Activated CD4-positive, alpha-beta memory T cell treated with anti-CD3 and anti-CD28 coated beads, Interleukin-2, amount 10 ng/mL, durations not matched to agents 7 days and 5 days (primary cell): ENCODE measurements at regions of chr2 and their contacts with region 1.

Region 1: GRCh38 chr2:181715033-181715630 is 34.8 kb upstream of the NEUROD1 start:
- DNase-seq: peak; percentile 73
- H3K4me3 Mint-ChIP-seq: no peak overlapping the region
- H3K27ac Mint-ChIP-seq: no peak overlapping the region
- H3K4me1 Mint-ChIP-seq: no peaks in the 10 kb centered on the region
- H3K27me3 Mint-ChIP-seq: peaks cover 7% of the 10 kb centered on the region

Region 2: GRCh38 chr2:181077128-181077709 is 637.9 kb before region 1 on chr2:
- CTCF ChIA-PET with region 1: interaction called, 12 read pairs
- POLR2A ChIA-PET with region 1: no interaction called
- DNase-seq: no peak
- H3K4me3 Mint-ChIP-seq: no peak overlapping the region
- H3K27ac Mint-ChIP-seq: no peak overlapping the region
- H3K4me1 Mint-ChIP-seq: peaks cover 9% of the 10 kb centered on the region
- H3K27me3 Mint-ChIP-seq: no peaks in the 10 kb centered on the region

Region 3: GRCh38 chr2:181466661-181467576 is 248.2 kb before region 1 on chr2:
- CTCF ChIA-PET with region 1: interaction called, 12 read pairs
- POLR2A ChIA-PET with region 1: no interaction called
- DNase-seq: peak; percentile 84
- H3K4me3 Mint-ChIP-seq: peak overlapping the region; percentile 29
- H3K27ac Mint-ChIP-seq: peak overlapping the region; percentile 41
- H3K4me1 Mint-ChIP-seq: peaks cover 90% of the 10 kb centered on the region
- H3K27me3 Mint-ChIP-seq: no peaks in the 10 kb centered on the region

Region 4: GRCh38 chr2:181573140-181573736 is 141.9 kb before region 1 on chr2:
- CTCF ChIA-PET with region 1: interaction called, 43 read pairs
- POLR2A ChIA-PET with region 1: no interaction called
- DNase-seq: no peak
- H3K4me3 Mint-ChIP-seq: no peak overlapping the region
- H3K27ac Mint-ChIP-seq: no peak overlapping the region
- H3K4me1 Mint-ChIP-seq: no peaks in the 10 kb centered on the region
- H3K27me3 Mint-ChIP-seq: peaks cover 13% of the 10 kb centered on the region

Region 5: DNA sequence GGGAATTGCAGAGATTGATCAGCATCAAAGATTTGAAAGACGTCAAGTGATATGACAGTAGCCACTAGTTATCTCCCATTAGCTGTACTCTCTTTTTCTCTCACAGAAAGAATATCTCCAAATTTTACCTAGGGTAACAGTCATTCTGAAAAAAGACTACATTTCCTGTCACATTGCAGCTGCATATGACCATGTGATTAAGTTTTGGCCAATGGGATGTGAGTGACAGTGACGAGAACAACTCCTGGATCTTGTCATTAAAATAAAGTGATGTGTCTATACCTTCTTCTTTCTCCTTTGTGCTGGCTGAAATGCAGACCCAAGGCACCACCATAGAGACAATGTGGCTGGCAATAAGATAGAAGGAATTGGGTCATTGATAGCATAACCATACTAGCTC is 24.3 kb before region 1 on chr2:
- CTCF ChIA-PET with region 1: interaction called, 15 read pairs
- POLR2A ChIA-PET with region 1: no interaction called
- DNase-seq: no peak
- H3K4me3 Mint-ChIP-seq: no peak overlapping the region
- H3K27ac Mint-ChIP-seq: no peak overlapping the region
- H3K4me1 Mint-ChIP-seq: no peaks in the 10 kb centered on the region
- H3K27me3 Mint-ChIP-seq: peaks cover 41% of the 10 kb centered on the region